Heart right ventricle (tissue), 16 donors: ENCODE measurements at regions of chr11 and their contacts with region 1.

Region 1: GRCh38 chr11:19577976-19578619 is 134.5 kb upstream of the NAV2 start:
- DNase-seq: peak; percentile 30 to 50
- ATAC-seq: peak; percentile 65 to 73 (median 69)
- H3K4me3 ChIP-seq: peak overlapping the region in 2 of 10 donors; percentile 6 to 19
- H3K27ac ChIP-seq: peak overlapping the region; percentile 72 to 96 (median 84)
- H3K4me1 ChIP-seq: peaks cover 25 to 72% (median 44%) of the 10 kb centered on the region in 9 donors
- H3K27me3 ChIP-seq: no peaks in the 10 kb centered on the region
- CTCF ChIP-seq: peak in 1 of 9 donors; percentile 13

Region 2: GRCh38 chr11:19326499-19326898 is 251.6 kb before region 1 on chr11:
- intact Hi-C with region 1: no loop called
- DNase-seq: no peak
- ATAC-seq: peak in 1 of 8 donors; percentile 19
- H3K4me3 ChIP-seq: no peak overlapping the region
- H3K27ac ChIP-seq: no peak overlapping the region
- H3K4me1 ChIP-seq: no peaks in the 10 kb centered on the region
- H3K27me3 ChIP-seq: peaks cover 0 to 6% (median 3%) of the 10 kb centered on the region in 7 donors
- CTCF ChIP-seq: peak in 7 of 9 donors; percentile 21 to 41 (median 32)

Region 3: GRCh38 chr11:19539861-19540260 is 38.2 kb before region 1 on chr11:
- intact Hi-C with region 1: no loop called
- DNase-seq: no peak
- ATAC-seq: no peak
- H3K4me3 ChIP-seq: no peak overlapping the region
- H3K27ac ChIP-seq: no peak overlapping the region
- H3K4me1 ChIP-seq: no peaks in the 10 kb centered on the region
- H3K27me3 ChIP-seq: peaks cover 0 to 4% (median 0%) of the 10 kb centered on the region in 7 donors
- CTCF ChIP-seq: no peak

Region 4: DNA sequence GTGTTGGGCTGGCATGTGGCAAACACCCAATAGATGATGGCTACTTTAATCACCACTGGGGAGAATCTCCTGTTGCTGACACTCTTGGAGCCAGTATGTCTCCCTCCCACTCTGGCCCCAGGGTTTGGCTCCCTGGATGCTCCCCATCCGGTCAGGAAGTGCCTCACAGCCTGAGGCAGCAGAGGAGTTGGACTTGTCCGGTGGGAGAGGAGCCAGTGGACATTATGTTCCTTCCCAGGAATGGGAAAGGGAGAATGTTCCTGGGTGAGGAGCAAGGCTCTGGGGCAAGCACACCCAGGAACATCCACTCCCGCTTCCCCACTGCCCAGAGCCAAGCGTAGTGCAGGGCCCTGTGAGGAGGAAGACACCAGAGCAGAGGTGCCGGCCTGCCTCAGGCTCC is 49.9 kb after region 1 on chr11:
- intact Hi-C with region 1: loop called in 1 of 10 experiments (anchors 5 kb)
- DNase-seq: peak; percentile 58 to 60
- ATAC-seq: peak; percentile 84 to 97 (median 94)
- H3K4me3 ChIP-seq: no peak overlapping the region
- H3K27ac ChIP-seq: peak overlapping the region in 9 of 10 donors; percentile 24 to 75 (median 54)
- H3K4me1 ChIP-seq: peaks cover 0 to 35% (median 24%) of the 10 kb centered on the region in 9 donors
- H3K27me3 ChIP-seq: no peaks in the 10 kb centered on the region
- CTCF ChIP-seq: no peak

Region 5: GRCh38 chr11:19679952-19680828 is 102.1 kb after region 1 on chr11:
- intact Hi-C with region 1: loop called in 4 of 10 experiments (anchors 5 to 10 kb)
- DNase-seq: peak; percentile 74 to 87
- ATAC-seq: peak; percentile 62 to 88 (median 82)
- H3K4me3 ChIP-seq: no peak overlapping the region
- H3K27ac ChIP-seq: peak overlapping the region; percentile 43 to 89 (median 72)
- H3K4me1 ChIP-seq: peaks cover 23 to 94% (median 71%) of the 10 kb centered on the region in 9 donors
- H3K27me3 ChIP-seq: no peaks in the 10 kb centered on the region
- CTCF ChIP-seq: no peak

Region 6: DNA sequence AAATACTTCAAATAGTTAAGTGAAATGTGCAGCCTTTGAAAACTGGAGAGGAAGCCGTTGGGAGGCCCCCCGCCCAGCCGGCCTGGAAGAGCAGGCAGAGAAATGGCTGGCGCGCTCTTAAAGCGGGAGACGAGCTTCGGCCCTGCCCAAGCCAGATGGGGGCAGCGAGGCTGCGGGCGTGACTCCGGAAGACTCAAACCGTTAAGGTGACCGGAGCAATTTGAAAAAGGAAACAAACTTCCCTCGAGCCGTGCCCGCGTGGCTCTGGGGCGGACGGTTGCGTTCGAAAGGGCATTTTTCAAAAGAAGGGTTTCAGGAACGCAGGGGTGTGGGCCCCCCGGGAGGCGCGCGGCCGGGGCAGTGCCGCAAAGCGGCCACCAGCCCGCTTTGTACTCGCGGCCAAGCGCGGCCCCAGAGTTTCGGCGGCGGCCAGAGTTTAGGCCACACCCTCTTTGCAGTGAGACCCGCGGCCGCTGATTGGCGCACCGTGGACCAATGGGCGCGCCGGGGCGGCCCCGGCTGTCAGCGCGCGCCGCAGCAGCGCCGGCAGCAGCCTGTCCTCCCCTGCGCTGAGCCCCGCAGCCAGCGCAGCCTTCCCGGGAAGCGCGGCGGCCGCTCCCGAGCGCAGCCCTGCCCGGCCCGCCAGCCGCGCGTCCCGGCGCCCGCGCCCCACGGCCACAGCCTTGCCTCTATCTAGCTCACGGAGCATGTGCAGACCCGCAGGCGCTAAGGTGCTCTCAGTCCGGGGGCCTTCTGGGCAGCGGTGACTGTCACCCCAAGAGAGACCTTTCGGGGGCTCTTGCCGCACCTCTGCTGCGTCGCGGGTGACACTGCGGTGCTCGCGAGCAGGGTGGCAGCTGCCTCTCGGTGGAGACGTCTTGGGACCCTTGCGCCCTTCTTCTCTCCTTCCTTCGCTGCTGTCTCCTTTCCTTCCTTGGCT is 134.5 kb after region 1 on chr11 and contains the start of gene NAV2:
- intact Hi-C with region 1: loop called in 3 of 10 experiments (anchors 5 to 10 kb)
- DNase-seq: peak; percentile 92 to 93
- ATAC-seq: peak; percentile 88 to 97 (median 94)
- H3K4me3 ChIP-seq: peak within 1 kb of the TSS; percentile 50 to 83 (median 74)
- H3K27ac ChIP-seq: peak within 1 kb of the TSS; percentile 85 to 98 (median 96)
- H3K4me1 ChIP-seq: peaks cover 7 to 60% (median 47%) of the 10 kb centered on the region in 9 donors
- H3K27me3 ChIP-seq: peaks cover 0 to 33% (median 0%) of the 10 kb centered on the region in 7 donors
- CTCF ChIP-seq: peak in 4 of 9 donors; percentile 4 to 21 (median 13)
- total RNA-seq, gene NAV2: 11.3 to 34.7 (median 23.7) TPM